PC-3 (cell line): ENCODE measurements at regions of chr12 and their contacts with region 1.

Region 1: GRCh38 chr12:108784270-108784669 is 53.0 kb upstream of the CORO1C start:
- DNase-seq: no peak
- ATAC-seq: no peak
- H3K4me3 ChIP-seq: no peak overlapping the region
- H3K27ac ChIP-seq: no peak overlapping the region
- H3K4me1 ChIP-seq: peaks cover 6% of the 10 kb centered on the region; the same call in 1 of the 2 replicates
- H3K27me3 ChIP-seq: no peaks in the 10 kb centered on the region
- CTCF ChIP-seq: no peak

Region 2: DNA sequence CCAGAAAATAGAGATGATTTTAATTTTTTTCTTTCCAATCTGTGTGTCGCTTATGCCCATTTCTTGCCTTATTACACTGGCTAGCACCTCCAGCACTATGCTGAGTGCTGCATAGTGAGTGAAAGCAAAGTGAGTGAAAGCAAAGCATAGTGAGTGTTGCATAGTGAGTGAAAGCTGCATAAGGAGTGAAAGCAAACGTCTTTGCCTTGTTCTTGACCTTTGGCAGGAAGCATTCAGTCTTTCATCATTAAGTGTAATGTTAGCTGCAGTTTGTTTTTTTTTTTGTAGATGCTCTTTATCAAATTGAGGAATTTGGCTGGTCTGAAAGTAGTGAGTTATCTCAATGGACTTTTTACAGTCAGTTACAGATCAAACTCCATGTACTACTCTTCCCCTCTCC is 46.1 kb before region 1 on chr12:
- CTCF ChIA-PET with region 1: interaction called, 3 read pairs
- POLR2A ChIA-PET with region 1: no interaction called
- intact Hi-C with region 1: loop called (anchors 5 kb)
- DNase-seq: no peak
- ATAC-seq: no peak
- H3K4me3 ChIP-seq: no peak overlapping the region
- H3K27ac ChIP-seq: no peak overlapping the region
- H3K4me1 ChIP-seq: peaks cover 15% of the 10 kb centered on the region
- H3K27me3 ChIP-seq: no peaks in the 10 kb centered on the region
- CTCF ChIP-seq: no peak